Colonic mucosa (tissue), 4 donors: ENCODE measurements at regions of chr17 and their contacts with region 1.

Region 1: GRCh38 chr17:30124273-30124796 is 7.7 kb downstream of the NSRP1 start:
- DNase-seq: no peak
- H3K4me3 ChIP-seq: no peak overlapping the region
- H3K27ac ChIP-seq: no peak overlapping the region
- H3K4me1 ChIP-seq: no peaks in the 10 kb centered on the region
- H3K27me3 ChIP-seq: no peaks in the 10 kb centered on the region
- CTCF ChIP-seq: no peak

Region 2: DNA sequence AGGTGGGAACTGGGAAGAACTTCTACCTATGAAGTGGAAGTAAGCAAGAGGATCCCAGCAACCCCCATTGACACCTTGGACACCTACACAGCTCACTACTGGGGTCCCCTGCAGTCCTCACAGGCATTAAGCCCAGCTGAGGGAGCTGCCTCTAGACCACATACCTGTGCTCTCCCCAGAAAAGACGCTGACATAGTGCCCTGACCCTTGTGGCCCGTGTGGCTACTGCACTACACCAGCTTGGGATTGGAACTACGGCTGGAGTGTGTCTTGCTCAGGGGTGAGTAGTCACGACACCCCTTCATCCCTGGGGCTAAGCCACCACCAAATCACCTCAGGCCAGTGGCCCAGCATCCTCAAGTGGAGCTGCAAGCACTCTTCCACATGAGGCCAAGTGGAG is 62.0 kb before region 1 on chr17:
- intact Hi-C with region 1: no loop called
- DNase-seq: no peak
- H3K4me3 ChIP-seq: no peak overlapping the region
- H3K27ac ChIP-seq: no peak overlapping the region
- H3K4me1 ChIP-seq: no peaks in the 10 kb centered on the region
- H3K27me3 ChIP-seq: no peaks in the 10 kb centered on the region
- CTCF ChIP-seq: no peak

Region 3: DNA sequence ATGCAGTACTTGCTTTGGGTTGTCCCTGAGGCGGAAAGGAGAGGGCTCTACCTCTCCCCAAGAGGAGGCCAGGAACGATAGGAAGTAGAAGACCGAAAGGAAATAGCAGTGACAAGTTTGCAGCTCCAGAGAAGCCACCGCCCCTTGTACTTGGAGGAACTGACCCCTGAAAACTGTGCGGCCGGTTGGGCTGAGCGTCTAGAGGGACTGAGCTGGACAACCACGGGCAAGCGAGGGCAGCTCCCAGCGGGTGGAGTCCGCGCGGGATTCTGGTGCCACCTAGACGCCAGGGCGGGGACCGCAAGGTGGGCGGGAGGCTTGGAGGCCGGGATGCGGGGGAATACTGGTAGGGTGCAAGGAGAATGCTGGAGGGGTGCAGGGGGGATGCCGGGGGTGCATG is 112.4 kb after region 1 on chr17:
- intact Hi-C with region 1: loop called (anchors 10 kb)
- DNase-seq: peak; percentile 37
- H3K4me3 ChIP-seq: no peak overlapping the region
- H3K27ac ChIP-seq: no peak overlapping the region
- H3K4me1 ChIP-seq: peaks cover 11% of the 10 kb centered on the region
- H3K27me3 ChIP-seq: peaks cover 32% of the 10 kb centered on the region
- CTCF ChIP-seq: no peak

Region 4: DNA sequence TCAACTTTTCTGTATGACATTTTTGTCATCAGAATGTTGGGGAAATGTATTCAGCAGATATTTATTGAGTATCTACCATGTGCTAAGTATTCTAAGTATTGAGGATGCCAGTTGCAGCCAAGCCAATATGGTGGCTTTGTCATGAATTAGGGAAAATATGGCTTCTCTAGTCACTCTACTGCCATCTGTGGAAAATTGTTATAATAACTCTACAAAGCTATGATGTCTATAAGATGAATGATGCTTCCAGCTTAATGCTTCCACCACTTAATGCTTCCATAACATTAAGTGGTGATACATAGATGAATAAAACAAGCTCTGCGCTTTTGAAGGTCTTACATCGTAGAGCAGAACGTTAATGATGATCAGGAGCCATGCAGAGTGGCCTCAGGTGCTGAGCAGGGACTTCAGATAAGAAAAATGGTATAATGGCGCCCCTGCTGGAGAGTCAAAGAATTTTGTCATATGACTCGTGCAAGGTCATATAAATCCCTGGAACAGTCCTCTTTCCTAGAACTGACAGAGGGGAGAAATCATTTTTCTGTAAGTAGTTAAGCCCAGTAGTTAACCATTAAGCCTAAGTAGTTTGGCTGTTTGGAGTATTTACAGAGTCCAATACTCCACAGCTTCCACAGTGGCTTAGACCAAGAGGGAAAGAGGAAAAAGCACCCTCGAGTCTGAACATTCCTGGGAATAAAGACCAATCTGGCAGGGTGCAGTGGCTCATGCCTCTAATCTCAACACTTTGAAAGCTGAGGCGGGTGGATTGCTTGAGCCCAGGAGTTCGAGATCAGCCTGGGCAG is 212.2 kb after region 1 on chr17:
- intact Hi-C with region 1: loop called (anchors 5 kb)
- DNase-seq: peak; percentile 79
- H3K4me3 ChIP-seq: no peak overlapping the region
- H3K27ac ChIP-seq: peak overlapping the region; percentile 50
- H3K4me1 ChIP-seq: peaks cover 9% of the 10 kb centered on the region
- H3K27me3 ChIP-seq: no peaks in the 10 kb centered on the region
- CTCF ChIP-seq: peak; percentile 66